Vagina (tissue), 2 donors: ENCODE measurements at regions of chr1 and their contacts with region 1.

Region 1: GRCh38 chr1:223845810-223846682 is at the start of gene TP53BP2:
- DNase-seq: no peak
- H3K4me3 ChIP-seq: peak within 1 kb of the TSS; percentile 64 to 100
- H3K27ac ChIP-seq: peak within 1 kb of the TSS; percentile 98
- H3K4me1 ChIP-seq: peaks cover 40% of the 10 kb centered on the region
- H3K27me3 ChIP-seq: no peaks in the 10 kb centered on the region
- CTCF ChIP-seq: peak; percentile 8 to 75 (median 50)
- POLR2A ChIP-seq: peak in 1 of 2 donors; percentile 88
- total RNA-seq, gene TP53BP2: 31.9 TPM

Region 2: DNA sequence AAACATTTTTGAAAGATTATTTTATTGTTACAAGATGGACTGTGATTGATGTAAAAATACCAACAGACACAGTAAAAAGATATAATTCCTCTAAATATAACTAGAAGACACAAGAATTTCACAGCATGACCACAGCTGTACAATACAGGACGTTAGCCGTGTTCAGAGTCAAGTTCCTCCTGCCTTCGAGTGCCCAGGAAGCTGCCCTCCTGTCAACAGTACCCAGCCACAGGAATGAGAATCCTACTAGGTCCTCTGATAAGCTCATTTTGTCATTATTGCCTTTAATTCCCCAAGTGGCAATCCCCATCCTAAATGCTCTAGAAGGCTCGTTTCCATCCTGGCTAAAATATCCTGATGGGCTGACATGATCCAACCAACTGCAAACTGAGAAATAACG is 150.1 kb before region 1 on chr1:
- intact Hi-C with region 1: no loop called
- DNase-seq: no peak
- H3K4me3 ChIP-seq: no peak overlapping the region
- H3K27ac ChIP-seq: no peak overlapping the region
- H3K4me1 ChIP-seq: peaks cover 18% of the 10 kb centered on the region
- H3K27me3 ChIP-seq: no peaks in the 10 kb centered on the region
- CTCF ChIP-seq: no peak
- POLR2A ChIP-seq: no peak

Region 3: GRCh38 chr1:223712194-223712849 is 133.7 kb before region 1 on chr1 and contains the start of gene CAPN2:
- intact Hi-C with region 1: loop called (anchors 5 kb)
- DNase-seq: no peak
- H3K4me3 ChIP-seq: peak within 1 kb of the TSS; percentile 68 to 75
- H3K27ac ChIP-seq: peak within 1 kb of the TSS; percentile 96
- H3K4me1 ChIP-seq: peaks cover 70% of the 10 kb centered on the region
- H3K27me3 ChIP-seq: no peaks in the 10 kb centered on the region
- CTCF ChIP-seq: peak; percentile 57 to 78 (median 58)
- POLR2A ChIP-seq: peak in 1 of 2 donors; percentile 89
- total RNA-seq, gene CAPN2: 208 TPM

Region 4: DNA sequence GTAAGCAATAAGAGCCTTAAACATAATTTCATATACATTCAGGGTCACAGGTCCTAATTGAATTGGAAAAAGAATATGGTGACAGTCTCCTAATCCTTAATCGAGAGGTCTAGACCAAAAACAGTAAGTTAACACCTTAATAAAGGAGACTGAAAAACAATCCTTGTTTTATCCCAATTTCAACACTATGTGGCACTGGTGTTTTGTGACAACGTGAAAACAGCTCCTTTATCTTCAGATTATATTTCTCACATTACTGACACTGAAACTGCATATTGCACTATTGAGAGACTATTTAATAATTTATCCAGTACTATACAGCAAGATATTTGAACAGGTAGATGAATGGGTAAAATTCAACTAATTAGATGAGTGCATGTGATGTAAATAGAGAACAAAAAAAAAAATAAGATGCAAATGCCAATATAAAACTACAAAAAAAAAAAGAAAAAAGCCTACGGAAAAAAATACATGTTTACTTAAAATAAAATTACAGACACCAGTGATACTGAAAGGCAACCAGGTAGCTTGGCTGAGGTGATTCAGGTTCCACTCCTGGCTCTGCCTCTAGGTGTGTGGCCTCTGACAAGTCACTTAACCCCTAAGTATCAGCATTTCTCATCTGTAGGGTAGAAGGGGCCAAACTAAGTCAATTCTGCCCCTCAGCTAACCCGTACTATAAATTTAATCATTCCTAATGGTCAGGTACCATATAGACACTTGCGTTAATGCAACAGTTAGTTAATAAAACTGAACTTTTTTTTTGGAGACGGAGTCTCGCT is 34.2 kb before region 1 on chr1:
- intact Hi-C with region 1: loop called (anchors 2 kb)
- DNase-seq: no peak
- H3K4me3 ChIP-seq: no peak overlapping the region
- H3K27ac ChIP-seq: no peak overlapping the region
- H3K4me1 ChIP-seq: no peaks in the 10 kb centered on the region
- H3K27me3 ChIP-seq: no peaks in the 10 kb centered on the region
- CTCF ChIP-seq: peak in 1 of 3 experiments; percentile 55
- POLR2A ChIP-seq: no peak